T-cell (primary cell): ENCODE measurements at regions of chr11 and their contacts with region 1.

Region 1: DNA sequence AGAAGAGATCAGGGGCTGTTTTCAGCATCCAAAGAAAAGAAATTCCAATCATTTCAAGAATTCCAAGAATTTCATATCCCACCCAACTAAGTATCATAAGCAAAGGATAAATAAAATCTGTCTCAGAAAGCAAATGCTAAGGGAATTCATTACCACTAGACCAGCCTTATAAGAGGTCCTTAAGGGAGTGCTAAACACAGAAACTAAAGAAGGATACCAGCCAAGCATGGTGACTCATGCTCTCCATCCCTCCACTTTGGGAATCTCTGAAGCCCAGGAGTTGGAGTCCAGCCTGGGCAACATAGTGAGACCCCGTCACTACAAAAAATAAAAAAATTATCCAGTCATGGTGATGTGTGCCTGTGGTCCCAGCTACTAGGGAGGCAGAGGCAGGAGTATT is 17.8 kb downstream of the FADD start:
- DNase-seq: no peak
- ATAC-seq: no peak
- H3K4me3 ChIP-seq: no peak overlapping the region
- H3K4me3 Mint-ChIP-seq: no peak overlapping the region
- H3K27ac ChIP-seq: no peak overlapping the region
- H3K27ac Mint-ChIP-seq: no peak overlapping the region
- H3K4me1 ChIP-seq: no peaks in the 10 kb centered on the region
- H3K4me1 Mint-ChIP-seq: no peaks in the 10 kb centered on the region
- H3K27me3 ChIP-seq: peaks cover 0 to 8% of the 10 kb centered on the region in 2 experiments
- H3K27me3 Mint-ChIP-seq: peaks cover 24 to 38% of the 10 kb centered on the region in 2 donors

Region 2: GRCh38 chr11:69992943-69993694 is 227.8 kb before region 1 on chr11:
- CTCF ChIA-PET with region 1: no interaction called
- POLR2A ChIA-PET with region 1: no interaction called
- DNase-seq: no peak
- ATAC-seq: no peak
- H3K4me3 ChIP-seq: no peak overlapping the region
- H3K4me3 Mint-ChIP-seq: no peak overlapping the region
- H3K27ac ChIP-seq: no peak overlapping the region
- H3K27ac Mint-ChIP-seq: no peak overlapping the region
- H3K4me1 ChIP-seq: no peaks in the 10 kb centered on the region
- H3K4me1 Mint-ChIP-seq: no peaks in the 10 kb centered on the region
- H3K27me3 ChIP-seq: peaks cover 5 to 30% of the 10 kb centered on the region in 2 experiments
- H3K27me3 Mint-ChIP-seq: peaks cover 36 to 47% of the 10 kb centered on the region in 2 donors

Region 3: DNA sequence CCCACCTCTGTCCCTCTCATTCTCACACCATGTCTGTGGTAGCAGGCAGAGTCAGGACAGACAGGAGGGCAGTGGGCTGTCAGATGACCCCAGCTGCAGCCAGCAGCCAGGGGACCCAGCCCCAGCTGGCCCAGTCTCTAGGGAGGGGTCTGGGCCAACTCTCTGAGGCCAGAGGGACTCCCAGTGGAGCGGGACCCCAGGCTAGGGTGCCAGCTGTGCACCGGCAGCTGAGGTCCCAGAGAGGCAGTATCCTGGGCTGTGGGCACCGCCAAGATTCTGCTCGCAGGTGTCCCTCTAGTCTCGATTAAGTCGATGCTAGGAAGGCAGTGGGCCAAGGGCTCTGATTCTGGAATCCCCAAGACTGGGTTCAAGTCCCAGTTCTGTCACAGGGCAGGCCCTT is 34.5 kb before region 1 on chr11:
- CTCF ChIA-PET with region 1: interaction called in 1 of 2 experiments, 25 read pairs
- POLR2A ChIA-PET with region 1: no interaction called
- DNase-seq: no peak
- ATAC-seq: no peak
- H3K4me3 ChIP-seq: no peak overlapping the region
- H3K4me3 Mint-ChIP-seq: no peak overlapping the region
- H3K27ac ChIP-seq: no peak overlapping the region
- H3K27ac Mint-ChIP-seq: no peak overlapping the region
- H3K4me1 ChIP-seq: peaks cover 0 to under 1% of the 10 kb centered on the region in 2 experiments
- H3K4me1 Mint-ChIP-seq: peaks cover 0 to 4% (median 0%) of the 10 kb centered on the region in 3 donors
- H3K27me3 ChIP-seq: peaks cover 0 to 45% of the 10 kb centered on the region in 2 experiments
- H3K27me3 Mint-ChIP-seq: peaks cover 6 to 14% of the 10 kb centered on the region in 2 donors